OCI-LY7 (cell line): ENCODE measurements at regions of chr2 and their contacts with region 1.

Region 1: GRCh38 chr2:134207564-134208209 is 46.2 kb upstream of the MGAT5 start:
- DNase-seq: peak; percentile 65
- H3K4me3 ChIP-seq: no peak overlapping the region
- H3K27ac ChIP-seq: no peak overlapping the region
- H3K4me1 ChIP-seq: peaks cover 44% of the 10 kb centered on the region
- CTCF ChIP-seq: peak; percentile 85

Region 2: GRCh38 chr2:134224005-134224404 is 16.3 kb after region 1 on chr2:
- CTCF ChIA-PET with region 1: interaction called, 4 read pairs
- POLR2A ChIA-PET with region 1: interaction called, 10 read pairs
- intact Hi-C with region 1: no loop called
- DNase-seq: no peak
- H3K4me3 ChIP-seq: no peak overlapping the region
- H3K27ac ChIP-seq: no peak overlapping the region
- H3K4me1 ChIP-seq: peaks cover 19% of the 10 kb centered on the region
- CTCF ChIP-seq: no peak